ENCODE measurements at regions of chr1 and their contacts with region 1.

Region 1: DNA sequence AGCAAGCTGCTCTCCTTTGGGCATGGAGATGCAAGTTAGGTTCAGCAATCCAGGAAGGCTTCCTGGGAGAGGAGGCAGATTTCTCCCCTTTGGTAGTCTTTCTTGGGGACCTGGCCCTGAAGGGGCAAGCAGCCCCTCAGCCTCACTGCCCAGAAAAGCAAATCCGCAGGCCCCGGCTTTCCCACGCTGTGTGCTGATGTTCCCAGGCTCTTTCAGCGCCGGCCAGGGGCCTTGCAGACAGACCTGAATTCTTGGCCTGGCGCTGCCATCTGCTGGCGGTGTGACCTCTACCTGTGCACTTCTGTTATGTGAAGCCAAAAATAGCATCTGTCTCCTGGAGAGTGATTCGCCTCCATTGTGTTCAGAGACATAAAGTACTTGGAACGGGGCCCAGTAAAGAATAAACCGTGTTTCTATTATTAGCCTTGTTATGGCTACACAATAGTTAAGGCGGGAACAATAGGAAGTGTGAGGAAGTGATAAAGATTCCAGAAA is 64.8 kb downstream of the ALPL start:
- DNase-seq: peak; percentile 84 to 90
- ATAC-seq: peak; percentile 88 to 93 (median 92)
- H3K4me3 ChIP-seq: peak overlapping the region in 3 of 10 donors; percentile 13 to 21 (median 17)
- H3K27ac ChIP-seq: peak overlapping the region in 9 of 10 donors; percentile 68 to 92 (median 83)
- H3K4me1 ChIP-seq: peaks cover 13 to 27% (median 25%) of the 10 kb centered on the region in 9 donors
- H3K27me3 ChIP-seq: peaks cover 0 to 14% (median 0%) of the 10 kb centered on the region in 7 donors
- CTCF ChIP-seq: peak; percentile 44 to 82 (median 68)

Region 2: DNA sequence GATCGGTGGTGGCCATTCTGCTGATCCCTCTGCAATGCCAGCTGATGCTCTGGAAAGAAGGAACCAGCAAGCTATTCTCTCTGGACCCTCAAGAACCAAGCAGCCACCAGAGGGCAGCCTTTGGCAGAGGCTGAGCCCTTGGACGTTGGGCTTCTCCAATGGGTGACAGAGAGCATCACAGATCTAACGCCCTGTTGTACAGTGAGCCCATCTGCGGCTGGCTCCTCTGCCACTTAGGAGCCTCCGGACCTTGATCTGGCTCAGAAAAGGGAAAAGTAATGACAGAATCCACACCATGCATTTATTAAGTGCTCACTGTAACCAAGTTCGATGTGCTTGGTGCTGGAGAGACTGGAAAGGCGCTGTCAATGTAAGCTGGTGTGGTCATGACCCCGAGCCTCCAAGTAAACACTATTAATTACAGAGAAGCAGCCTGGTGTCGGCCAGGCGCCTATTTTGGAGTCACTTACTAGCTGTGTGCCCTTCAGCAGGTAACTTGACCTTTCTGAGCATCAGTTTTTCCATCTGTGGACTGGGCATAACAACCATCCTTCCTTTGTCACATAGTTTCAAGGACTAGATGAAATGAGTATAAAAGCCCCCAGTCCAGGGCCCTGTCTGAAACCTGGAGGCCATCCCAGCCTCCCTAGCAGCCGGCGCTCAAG is 318.6 kb before region 1 on chr1:
- intact Hi-C with region 1: loop called in 1 of 10 experiments (anchors 10 kb)
- DNase-seq: peak; percentile 88 to 89
- ATAC-seq: peak; percentile 78 to 90 (median 89)
- H3K4me3 ChIP-seq: no peak overlapping the region
- H3K27ac ChIP-seq: peak overlapping the region in 7 of 10 donors; percentile 9 to 66 (median 50)
- H3K4me1 ChIP-seq: peaks cover 6 to 43% (median 26%) of the 10 kb centered on the region in 9 donors
- H3K27me3 ChIP-seq: no peaks in the 10 kb centered on the region
- CTCF ChIP-seq: peak; percentile 70 to 95 (median 89)

Region 3: GRCh38 chr1:21378705-21379494 is 195.1 kb before region 1 on chr1:
- intact Hi-C with region 1: loop called in 4 of 10 experiments (anchors 5 to 10 kb)
- DNase-seq: no peak
- ATAC-seq: no peak
- H3K4me3 ChIP-seq: no peak overlapping the region
- H3K27ac ChIP-seq: no peak overlapping the region
- H3K4me1 ChIP-seq: no peaks in the 10 kb centered on the region
- H3K27me3 ChIP-seq: peaks cover 0 to 56% (median 11%) of the 10 kb centered on the region in 7 donors
- CTCF ChIP-seq: no peak

Region 4: GRCh38 chr1:21539933-21540332 is 34.1 kb before region 1 on chr1:
- intact Hi-C with region 1: loop called in 4 of 10 experiments (anchors 1 to 2 kb)
- DNase-seq: peak; percentile 60 to 64
- ATAC-seq: peak in 6 of 8 donors; percentile 8 to 64 (median 36)
- H3K4me3 ChIP-seq: no peak overlapping the region
- H3K27ac ChIP-seq: peak overlapping the region in 6 of 10 donors; percentile 25 to 91 (median 76)
- H3K4me1 ChIP-seq: peaks cover 13 to 83% (median 49%) of the 10 kb centered on the region in 9 donors
- H3K27me3 ChIP-seq: peaks cover 0 to 21% (median 0%) of the 10 kb centered on the region in 7 donors
- CTCF ChIP-seq: peak in 7 of 9 donors; percentile 23 to 55 (median 37)

Measured in heart right ventricle (tissue), 16 donors.